ENCODE measurements at regions of chr7 and their contacts with region 1.

Region 1: GRCh38 chr7:13262929-13263530 is 575.6 kb downstream of the ARL4A start:
- DNase-seq: peak; percentile 57
- H3K4me3 Mint-ChIP-seq: no peak overlapping the region
- H3K27ac Mint-ChIP-seq: no peak overlapping the region
- H3K4me1 Mint-ChIP-seq: no peaks in the 10 kb centered on the region
- H3K27me3 Mint-ChIP-seq: no peaks in the 10 kb centered on the region
- CTCF ChIP-seq: peak; percentile 59

Region 2: DNA sequence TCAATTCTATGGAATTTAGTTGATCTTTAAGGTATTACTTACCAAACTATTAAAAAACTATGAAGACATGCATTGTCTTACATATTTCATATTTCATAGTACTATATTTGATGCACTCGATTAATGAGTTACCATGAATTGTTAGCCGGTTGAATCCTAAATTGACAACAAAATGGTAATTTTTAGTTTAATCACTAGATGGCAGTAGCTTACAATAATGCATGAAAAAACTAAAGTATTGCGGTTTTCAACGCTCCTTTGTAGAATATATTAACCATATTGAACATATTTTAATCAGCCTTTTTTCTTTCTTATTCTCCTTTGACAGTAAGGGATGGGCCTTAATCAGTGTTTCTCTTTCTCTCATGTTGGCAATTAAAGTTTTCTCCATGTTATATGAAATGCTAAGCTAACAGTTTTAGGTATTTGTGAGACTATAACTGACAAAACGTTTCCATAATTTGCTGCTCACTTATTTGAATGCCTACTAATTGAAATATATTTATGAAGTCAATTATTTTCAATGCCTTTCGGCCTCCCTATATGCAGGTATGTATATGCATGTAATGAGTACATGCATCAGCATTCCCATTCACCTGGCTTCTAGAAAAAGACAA is 624.1 kb before region 1 on chr7:
- CTCF ChIA-PET with region 1: interaction called, 19 read pairs
- POLR2A ChIA-PET with region 1: interaction called, 3 read pairs
- intact Hi-C with region 1: loop called (anchors 1 kb)
- DNase-seq: peak; percentile 50
- H3K4me3 Mint-ChIP-seq: no peak overlapping the region
- H3K27ac Mint-ChIP-seq: no peak overlapping the region
- H3K4me1 Mint-ChIP-seq: no peaks in the 10 kb centered on the region
- H3K27me3 Mint-ChIP-seq: no peaks in the 10 kb centered on the region
- CTCF ChIP-seq: peak; percentile 50

Region 3: GRCh38 chr7:13139436-13139835 is 123.6 kb before region 1 on chr7:
- CTCF ChIA-PET with region 1: no interaction called
- POLR2A ChIA-PET with region 1: no interaction called
- intact Hi-C with region 1: no loop called
- DNase-seq: no peak
- H3K4me3 Mint-ChIP-seq: no peak overlapping the region
- H3K27ac Mint-ChIP-seq: no peak overlapping the region
- H3K4me1 Mint-ChIP-seq: no peaks in the 10 kb centered on the region
- H3K27me3 Mint-ChIP-seq: no peaks in the 10 kb centered on the region
- CTCF ChIP-seq: no peak

Region 4: DNA sequence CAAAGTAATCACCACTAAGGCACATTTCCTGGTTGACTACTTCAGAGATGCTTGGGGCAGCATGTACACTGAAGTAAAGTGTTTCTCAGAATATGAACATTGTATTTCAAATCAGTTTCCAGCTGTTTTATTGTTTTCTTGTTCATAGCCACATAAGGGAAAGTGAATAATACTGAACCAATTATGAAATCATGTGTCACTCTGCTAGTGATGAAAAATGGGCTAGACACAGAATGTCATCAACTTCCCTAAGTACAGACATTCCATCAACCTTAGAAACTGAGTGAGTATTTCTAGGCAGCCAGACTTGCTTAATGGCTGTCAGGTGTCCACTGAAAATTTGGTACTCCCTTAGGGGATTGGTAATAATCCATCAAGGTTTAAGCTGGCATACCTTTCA is 27.9 kb after region 1 on chr7:
- CTCF ChIA-PET with region 1: no interaction called
- POLR2A ChIA-PET with region 1: no interaction called
- intact Hi-C with region 1: no loop called
- DNase-seq: peak; percentile 26
- H3K4me3 Mint-ChIP-seq: no peak overlapping the region
- H3K27ac Mint-ChIP-seq: no peak overlapping the region
- H3K4me1 Mint-ChIP-seq: no peaks in the 10 kb centered on the region
- H3K27me3 Mint-ChIP-seq: peaks cover 9% of the 10 kb centered on the region
- CTCF ChIP-seq: no peak

Region 5: DNA sequence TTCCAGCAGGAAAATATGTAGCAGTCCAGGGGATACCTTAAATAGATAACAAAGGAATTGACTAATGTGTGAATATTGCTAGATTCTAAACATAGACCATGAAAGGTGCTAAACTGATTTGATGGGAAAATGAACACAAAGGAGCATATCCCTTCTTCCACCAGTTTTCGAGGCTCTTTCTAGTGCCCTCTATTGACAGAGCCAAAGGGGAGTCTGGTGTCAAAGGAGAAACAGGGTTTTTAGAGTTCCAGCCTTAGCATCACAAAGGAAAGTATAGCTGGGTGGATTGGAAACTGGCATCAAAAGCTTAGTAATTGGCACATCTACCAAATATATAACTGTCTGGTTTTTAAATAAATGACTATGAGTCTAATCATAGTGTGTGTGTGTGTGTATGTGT is 89.6 kb after region 1 on chr7:
- CTCF ChIA-PET with region 1: no interaction called
- POLR2A ChIA-PET with region 1: no interaction called
- intact Hi-C with region 1: no loop called
- DNase-seq: no peak
- H3K4me3 Mint-ChIP-seq: no peak overlapping the region
- H3K27ac Mint-ChIP-seq: no peak overlapping the region
- H3K4me1 Mint-ChIP-seq: no peaks in the 10 kb centered on the region
- H3K27me3 Mint-ChIP-seq: no peaks in the 10 kb centered on the region
- CTCF ChIP-seq: no peak

Region 6: DNA sequence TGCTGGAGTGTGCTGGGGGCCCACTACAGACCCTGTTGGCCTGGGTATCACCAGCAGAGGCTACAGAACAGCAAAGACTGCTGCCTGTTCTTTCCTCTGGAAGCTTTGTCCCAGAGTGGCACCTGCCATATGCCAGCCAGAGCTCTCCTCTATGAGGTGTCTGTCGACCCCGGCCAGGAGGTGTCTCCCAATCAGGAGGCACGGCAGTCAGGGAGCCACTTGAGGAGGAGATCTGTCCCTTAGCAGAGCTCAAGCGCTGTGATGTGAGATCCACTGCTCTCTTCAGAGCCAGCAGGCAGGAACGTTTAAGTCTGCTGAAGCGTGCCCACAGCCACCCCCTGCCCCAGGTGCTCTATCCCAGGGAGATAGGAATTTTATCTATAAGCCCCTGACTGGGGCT is 410.3 kb after region 1 on chr7:
- CTCF ChIA-PET with region 1: no interaction called
- POLR2A ChIA-PET with region 1: no interaction called
- intact Hi-C with region 1: no loop called
- DNase-seq: no peak
- H3K4me3 Mint-ChIP-seq: no peak overlapping the region
- H3K27ac Mint-ChIP-seq: no peak overlapping the region
- H3K4me1 Mint-ChIP-seq: no peaks in the 10 kb centered on the region
- H3K27me3 Mint-ChIP-seq: no peaks in the 10 kb centered on the region
- CTCF ChIP-seq: no peak

Measured in MCF 10A (cell line).